ENCODE measurements at regions of chr14 and their contacts with region 1.

Region 1: DNA sequence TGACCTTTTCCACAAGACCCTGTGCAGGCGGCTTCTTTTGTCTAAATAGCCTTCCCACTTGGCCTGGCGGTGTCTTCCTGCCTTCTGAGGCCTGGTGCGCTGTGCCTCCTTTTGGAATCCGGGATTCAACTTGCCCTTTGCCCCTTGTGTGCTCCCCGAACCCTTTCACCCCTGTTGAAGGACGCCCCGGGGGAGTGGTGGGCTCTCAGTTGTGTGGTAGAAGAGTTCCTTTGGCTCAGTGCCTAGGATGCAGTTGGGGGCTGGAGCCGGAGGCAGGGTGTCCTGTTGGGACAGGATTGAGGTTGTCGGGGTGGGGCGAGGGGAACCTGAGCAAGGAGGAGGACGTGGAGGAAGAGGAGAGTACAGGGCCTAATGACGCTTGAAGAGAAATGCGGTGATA is 34.5 kb downstream of the KLC1 start:
- DNase-seq: no peak
- H3K4me3 ChIP-seq: no peak overlapping the region
- H3K4me3 Mint-ChIP-seq: peak overlapping the region; percentile 14
- H3K27ac Mint-ChIP-seq: peak overlapping the region; percentile 33
- H3K4me1 ChIP-seq: no peaks in the 10 kb centered on the region
- H3K4me1 Mint-ChIP-seq: peaks cover 6% of the 10 kb centered on the region
- H3K27me3 ChIP-seq: no peaks in the 10 kb centered on the region
- H3K27me3 Mint-ChIP-seq: no peaks in the 10 kb centered on the region
- CTCF ChIP-seq: no peak

Region 2: GRCh38 chr14:103576371-103577024 is 87.0 kb before region 1 on chr14:
- CTCF ChIA-PET with region 1: no interaction called
- POLR2A ChIA-PET with region 1: no interaction called
- intact Hi-C with region 1: loop called (anchors 10 kb)
- DNase-seq: no peak
- H3K4me3 ChIP-seq: no peak overlapping the region
- H3K4me3 Mint-ChIP-seq: no peak overlapping the region
- H3K27ac Mint-ChIP-seq: no peak overlapping the region
- H3K4me1 ChIP-seq: no peaks in the 10 kb centered on the region
- H3K4me1 Mint-ChIP-seq: no peaks in the 10 kb centered on the region
- H3K27me3 ChIP-seq: no peaks in the 10 kb centered on the region
- H3K27me3 Mint-ChIP-seq: no peaks in the 10 kb centered on the region
- CTCF ChIP-seq: no peak

Region 3: DNA sequence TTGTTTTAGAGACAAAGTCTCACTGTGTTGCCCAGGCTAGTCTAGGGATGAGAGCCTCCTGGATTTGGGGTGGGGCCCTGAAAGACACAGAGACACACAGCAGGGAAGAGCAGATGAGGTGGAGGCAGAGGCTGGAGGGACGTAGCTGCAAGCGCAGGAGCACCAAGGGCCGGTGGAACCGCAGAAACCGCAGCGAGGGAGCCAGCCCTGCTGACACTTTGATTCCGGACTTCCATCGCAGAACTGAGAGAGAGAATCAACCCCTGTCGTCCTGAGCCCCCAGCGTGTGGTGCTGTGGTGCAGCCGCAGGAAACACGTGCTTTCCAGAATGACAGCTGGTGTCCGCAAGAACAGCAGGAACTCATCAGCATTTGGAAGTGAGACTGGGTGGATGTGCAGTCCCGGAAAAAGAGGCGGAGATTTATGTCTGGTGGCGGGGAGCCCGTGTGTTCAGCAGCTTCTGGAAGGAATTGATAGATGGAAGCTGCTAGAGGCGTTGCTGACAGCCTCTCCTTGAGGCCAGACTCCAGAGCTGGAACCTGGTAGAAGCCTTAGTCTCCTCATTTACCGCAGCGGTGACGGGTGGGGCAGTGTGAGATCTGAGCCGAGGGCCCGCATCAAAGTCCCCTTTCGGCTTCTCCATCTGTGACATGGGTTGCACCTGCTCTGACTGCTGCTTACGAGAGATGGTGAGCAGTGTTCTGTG is 56.4 kb before region 1 on chr14:
- CTCF ChIA-PET with region 1: no interaction called
- POLR2A ChIA-PET with region 1: no interaction called
- intact Hi-C with region 1: loop called (anchors 2 kb)
- DNase-seq: peak; percentile 44 to 50
- H3K4me3 ChIP-seq: no peak overlapping the region
- H3K4me3 Mint-ChIP-seq: peak overlapping the region; percentile 71
- H3K27ac Mint-ChIP-seq: no peak overlapping the region
- H3K4me1 ChIP-seq: no peaks in the 10 kb centered on the region
- H3K4me1 Mint-ChIP-seq: peaks cover 9% of the 10 kb centered on the region
- H3K27me3 ChIP-seq: no peaks in the 10 kb centered on the region
- H3K27me3 Mint-ChIP-seq: peaks cover 4% of the 10 kb centered on the region
- CTCF ChIP-seq: peak in 1 of 2 experiments; percentile 59

Region 4: DNA sequence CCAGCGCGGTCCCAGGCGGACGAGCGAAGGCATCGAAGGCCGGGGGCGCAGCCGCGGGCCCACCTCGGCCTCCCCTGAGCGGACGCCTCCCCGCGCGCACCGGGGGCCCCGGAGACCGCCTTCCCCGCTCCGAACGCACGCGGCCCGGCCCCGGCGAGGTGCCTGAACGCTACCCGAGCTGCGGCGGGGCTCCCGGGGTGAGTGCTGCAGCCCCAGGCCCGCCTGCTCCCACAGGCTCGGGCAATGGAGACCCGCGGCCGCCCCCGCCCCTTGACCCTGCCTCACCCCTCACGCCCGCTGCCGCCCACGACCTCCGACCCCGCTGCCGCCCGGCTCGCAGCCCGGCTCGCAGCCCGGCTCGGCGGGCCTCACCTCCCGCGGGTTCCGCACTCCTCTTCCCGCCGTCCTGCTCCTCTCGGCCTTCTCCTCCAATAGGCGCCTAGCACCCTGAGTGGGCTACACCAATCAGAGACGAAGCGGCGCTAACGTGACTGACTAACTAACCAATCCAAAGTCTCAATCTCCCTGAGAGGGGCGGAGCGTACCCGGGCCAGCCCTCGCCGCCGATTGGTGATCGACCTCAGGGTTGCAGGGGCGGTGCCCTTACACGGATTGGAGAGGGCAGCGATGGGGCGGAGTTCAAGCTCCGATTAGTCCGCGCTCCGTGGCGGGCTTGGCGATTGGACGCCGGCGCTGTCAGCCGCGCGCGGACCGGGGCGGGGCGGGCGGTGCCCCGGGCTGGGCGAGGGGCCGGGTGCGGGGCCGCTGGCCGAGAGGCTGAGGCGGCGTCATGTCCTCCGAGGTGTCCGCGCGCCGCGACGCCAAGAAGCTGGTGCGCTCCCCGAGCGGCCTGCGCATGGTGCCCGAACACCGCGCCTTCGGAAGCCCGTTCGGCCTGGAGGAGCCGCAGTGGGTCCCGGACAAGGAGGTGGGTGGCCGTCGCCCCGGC is 51.8 kb after region 1 on chr14 and contains the starts of genes XRCC3 and ZFYVE21:
- CTCF ChIA-PET with region 1: no interaction called
- POLR2A ChIA-PET with region 1: no interaction called
- intact Hi-C with region 1: no loop called
- DNase-seq: peak; percentile 99
- H3K4me3 ChIP-seq: peak within 1 kb of the TSS; percentile 93
- H3K4me3 Mint-ChIP-seq: peak within 1 kb of the TSS; percentile 98
- H3K27ac Mint-ChIP-seq: peak within 1 kb of the TSS; percentile 94
- H3K4me1 ChIP-seq: peaks cover 5% of the 10 kb centered on the region; the same call in 1 of the 2 replicates
- H3K4me1 Mint-ChIP-seq: peaks cover 9% of the 10 kb centered on the region
- H3K27me3 ChIP-seq: no peaks in the 10 kb centered on the region
- H3K27me3 Mint-ChIP-seq: no peaks in the 10 kb centered on the region
- CTCF ChIP-seq: no peak
- total RNA-seq, gene XRCC3: 39.5 and 44.0 TPM in 2 replicates
- total RNA-seq, gene ZFYVE21: 61.6 and 66.2 TPM in 2 replicates

Region 5: GRCh38 chr14:104158827-104159798 is 495.6 kb after region 1 on chr14:
- CTCF ChIA-PET with region 1: no interaction called
- POLR2A ChIA-PET with region 1: no interaction called
- intact Hi-C with region 1: no loop called
- DNase-seq: no peak
- H3K4me3 ChIP-seq: no peak overlapping the region
- H3K4me3 Mint-ChIP-seq: no peak overlapping the region
- H3K27ac Mint-ChIP-seq: no peak overlapping the region
- H3K4me1 ChIP-seq: no peaks in the 10 kb centered on the region
- H3K4me1 Mint-ChIP-seq: no peaks in the 10 kb centered on the region
- H3K27me3 ChIP-seq: no peaks in the 10 kb centered on the region
- H3K27me3 Mint-ChIP-seq: peaks cover 3% of the 10 kb centered on the region
- CTCF ChIP-seq: no peak